GM13976 (cell line): ENCODE measurements at regions of chr14 and their contacts with region 1.

Region 1: GRCh38 chr14:55707365-55707804 is 127.4 kb downstream of the KTN1 start:
- DNase-seq: no peak
- CTCF ChIP-seq: peak; percentile 35

Region 2: GRCh38 chr14:55446218-55446654 is 261.1 kb before region 1 on chr14:
- in situ Hi-C with region 1: loop called (anchors 25 kb)
- DNase-seq: peak; percentile 67
- CTCF ChIP-seq: peak; percentile 62

Region 3: GRCh38 chr14:55807059-55807499 is 99.7 kb after region 1 on chr14:
- in situ Hi-C with region 1: no loop called
- DNase-seq: no peak
- CTCF ChIP-seq: no peak